ENCODE measurements at regions of chr2 and their contacts with region 1.

Region 1: GRCh38 chr2:16656784-16657391 is 8.7 kb downstream of the CYRIA start:
- DNase-seq: no peak
- ATAC-seq: peak; percentile 59
- H3K4me3 Mint-ChIP-seq: peak overlapping the region; percentile 77
- H3K27ac Mint-ChIP-seq: peak overlapping the region; percentile 89
- H3K4me1 Mint-ChIP-seq: peaks cover 99% of the 10 kb centered on the region
- H3K27me3 Mint-ChIP-seq: no peaks in the 10 kb centered on the region
- CTCF ChIP-seq: no peak

Region 2: GRCh38 chr2:16608661-16609643 is 47.9 kb before region 1 on chr2:
- CTCF ChIA-PET with region 1: interaction called, 12 read pairs
- POLR2A ChIA-PET with region 1: no interaction called
- intact Hi-C with region 1: no loop called
- DNase-seq: peak; percentile 79
- ATAC-seq: peak; percentile 92
- H3K4me3 Mint-ChIP-seq: peak overlapping the region; percentile 79
- H3K27ac Mint-ChIP-seq: peak overlapping the region; percentile 53
- H3K4me1 Mint-ChIP-seq: peaks cover 31% of the 10 kb centered on the region
- H3K27me3 Mint-ChIP-seq: no peaks in the 10 kb centered on the region
- CTCF ChIP-seq: peak; percentile 83

Region 3: GRCh38 chr2:16630463-16630862 is 26.4 kb before region 1 on chr2:
- CTCF ChIA-PET with region 1: interaction called, 12 read pairs
- POLR2A ChIA-PET with region 1: interaction called, 84 read pairs
- intact Hi-C with region 1: loop called (anchors 1 kb)
- DNase-seq: no peak
- ATAC-seq: peak; percentile 64
- H3K4me3 Mint-ChIP-seq: no peak overlapping the region
- H3K27ac Mint-ChIP-seq: peak overlapping the region; percentile 83
- H3K4me1 Mint-ChIP-seq: peaks cover 99% of the 10 kb centered on the region
- H3K27me3 Mint-ChIP-seq: no peaks in the 10 kb centered on the region
- CTCF ChIP-seq: no peak

Region 4: GRCh38 chr2:16635791-16636699 is 20.8 kb before region 1 on chr2:
- CTCF ChIA-PET with region 1: interaction called, 5 read pairs
- POLR2A ChIA-PET with region 1: interaction called, 84 read pairs
- intact Hi-C with region 1: no loop called
- DNase-seq: no peak
- ATAC-seq: peak; percentile 63
- H3K4me3 Mint-ChIP-seq: no peak overlapping the region
- H3K27ac Mint-ChIP-seq: peak overlapping the region; percentile 65
- H3K4me1 Mint-ChIP-seq: peaks cover 93% of the 10 kb centered on the region
- H3K27me3 Mint-ChIP-seq: no peaks in the 10 kb centered on the region
- CTCF ChIP-seq: no peak

Region 5: GRCh38 chr2:16713011-16713423 is 56.1 kb after region 1 on chr2:
- CTCF ChIA-PET with region 1: no interaction called
- POLR2A ChIA-PET with region 1: no interaction called
- intact Hi-C with region 1: loop called (anchors 1 kb)
- DNase-seq: no peak
- ATAC-seq: peak; percentile 80
- H3K4me3 Mint-ChIP-seq: peak overlapping the region; percentile 72
- H3K27ac Mint-ChIP-seq: peak overlapping the region; percentile 90
- H3K4me1 Mint-ChIP-seq: peaks cover 58% of the 10 kb centered on the region
- H3K27me3 Mint-ChIP-seq: no peaks in the 10 kb centered on the region
- CTCF ChIP-seq: no peak

Region 6: DNA sequence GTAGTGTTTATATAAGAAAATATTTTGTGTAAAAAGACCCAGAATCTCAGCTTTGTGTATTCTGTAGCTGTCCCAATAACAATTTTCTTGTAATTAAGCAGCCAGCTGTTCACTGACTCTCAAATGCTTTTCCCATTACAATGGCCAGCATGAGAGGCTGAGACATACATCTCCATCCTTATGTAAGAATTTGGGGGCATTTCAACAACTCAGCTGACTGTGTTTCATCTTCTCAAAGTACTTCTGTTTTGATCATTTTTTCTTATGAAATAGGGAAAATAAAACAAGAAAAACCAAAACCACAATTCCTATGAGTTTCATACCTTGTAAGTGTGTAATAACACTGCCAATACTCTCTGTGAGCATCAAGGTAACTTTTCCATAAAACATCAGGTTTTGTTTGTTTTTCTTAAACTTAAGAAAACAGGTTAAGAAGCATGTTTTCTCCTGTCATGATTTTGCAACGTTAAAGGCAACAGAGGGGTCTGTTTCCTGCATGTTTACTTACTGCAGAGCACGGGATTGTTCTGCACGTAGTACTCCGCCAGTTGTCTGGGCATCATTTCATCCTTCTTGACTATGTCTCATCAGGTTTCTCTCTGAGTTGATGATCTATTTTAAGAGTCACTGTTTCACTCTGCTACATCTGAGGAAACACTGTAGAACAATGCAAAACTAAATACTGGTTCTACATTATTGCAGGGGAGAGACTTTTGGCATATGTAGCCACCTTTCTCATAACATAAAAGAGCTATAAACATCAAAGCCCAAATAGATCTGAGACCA is 71.7 kb after region 1 on chr2:
- CTCF ChIA-PET with region 1: no interaction called
- POLR2A ChIA-PET with region 1: interaction called, 4 read pairs
- intact Hi-C with region 1: loop called (anchors 1 kb)
- DNase-seq: no peak
- ATAC-seq: peak; percentile 35
- H3K4me3 Mint-ChIP-seq: peak overlapping the region; percentile 25
- H3K27ac Mint-ChIP-seq: peak overlapping the region; percentile 51
- H3K4me1 Mint-ChIP-seq: peaks cover 39% of the 10 kb centered on the region
- H3K27me3 Mint-ChIP-seq: no peaks in the 10 kb centered on the region
- CTCF ChIP-seq: no peak

Region 7: GRCh38 chr2:16861530-16862196 is 204.8 kb after region 1 on chr2:
- CTCF ChIA-PET with region 1: no interaction called
- POLR2A ChIA-PET with region 1: no interaction called
- intact Hi-C with region 1: no loop called
- DNase-seq: no peak
- ATAC-seq: no peak
- H3K4me3 Mint-ChIP-seq: no peak overlapping the region
- H3K27ac Mint-ChIP-seq: no peak overlapping the region
- H3K4me1 Mint-ChIP-seq: no peaks in the 10 kb centered on the region
- H3K27me3 Mint-ChIP-seq: peaks cover 3% of the 10 kb centered on the region
- CTCF ChIP-seq: no peak

Region 8: DNA sequence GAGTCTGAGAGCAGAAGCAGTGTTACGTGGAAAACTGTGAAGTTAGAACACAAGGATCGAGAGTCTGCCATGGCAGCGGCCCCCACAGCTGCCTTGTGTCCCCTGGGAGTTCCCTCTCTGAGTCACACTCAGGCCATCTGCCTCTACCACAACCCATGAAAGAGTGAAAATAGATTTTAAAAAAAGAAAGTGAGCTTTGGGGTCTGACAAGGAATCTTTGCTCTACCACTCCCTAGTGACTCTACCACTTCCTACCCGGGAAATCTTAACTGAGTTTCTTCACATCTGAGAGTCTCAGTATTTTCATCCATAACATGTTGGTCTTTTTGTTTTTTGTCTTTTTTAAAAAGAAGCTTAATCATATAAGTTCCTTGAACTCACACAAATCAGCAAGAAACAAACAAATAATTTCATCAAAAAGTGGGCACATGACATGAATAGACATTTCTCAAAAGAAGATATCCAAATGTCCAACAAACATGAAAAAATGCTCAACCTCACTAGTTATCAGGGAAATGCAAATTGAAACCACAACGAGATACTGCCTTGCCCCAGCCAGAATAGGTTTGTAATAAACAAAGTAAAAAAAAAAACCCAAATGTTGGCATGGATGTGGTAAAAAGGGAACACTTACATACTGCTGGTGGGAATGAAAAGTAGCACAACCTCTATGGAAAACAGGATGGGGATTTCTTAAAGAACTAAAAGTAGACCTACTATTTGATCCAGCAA is 1157.0 kb after region 1 on chr2:
- CTCF ChIA-PET with region 1: no interaction called
- POLR2A ChIA-PET with region 1: no interaction called
- intact Hi-C with region 1: loop called (anchors 5 kb)
- DNase-seq: peak; percentile 56
- ATAC-seq: peak; percentile 82
- H3K4me3 Mint-ChIP-seq: peak overlapping the region; percentile 81
- H3K27ac Mint-ChIP-seq: peak overlapping the region; percentile 97
- H3K4me1 Mint-ChIP-seq: peaks cover 81% of the 10 kb centered on the region
- H3K27me3 Mint-ChIP-seq: no peaks in the 10 kb centered on the region
- CTCF ChIP-seq: no peak